OCI-LY7 (cell line): ENCODE measurements at regions of chr20 and their contacts with region 1.

Region 1: DNA sequence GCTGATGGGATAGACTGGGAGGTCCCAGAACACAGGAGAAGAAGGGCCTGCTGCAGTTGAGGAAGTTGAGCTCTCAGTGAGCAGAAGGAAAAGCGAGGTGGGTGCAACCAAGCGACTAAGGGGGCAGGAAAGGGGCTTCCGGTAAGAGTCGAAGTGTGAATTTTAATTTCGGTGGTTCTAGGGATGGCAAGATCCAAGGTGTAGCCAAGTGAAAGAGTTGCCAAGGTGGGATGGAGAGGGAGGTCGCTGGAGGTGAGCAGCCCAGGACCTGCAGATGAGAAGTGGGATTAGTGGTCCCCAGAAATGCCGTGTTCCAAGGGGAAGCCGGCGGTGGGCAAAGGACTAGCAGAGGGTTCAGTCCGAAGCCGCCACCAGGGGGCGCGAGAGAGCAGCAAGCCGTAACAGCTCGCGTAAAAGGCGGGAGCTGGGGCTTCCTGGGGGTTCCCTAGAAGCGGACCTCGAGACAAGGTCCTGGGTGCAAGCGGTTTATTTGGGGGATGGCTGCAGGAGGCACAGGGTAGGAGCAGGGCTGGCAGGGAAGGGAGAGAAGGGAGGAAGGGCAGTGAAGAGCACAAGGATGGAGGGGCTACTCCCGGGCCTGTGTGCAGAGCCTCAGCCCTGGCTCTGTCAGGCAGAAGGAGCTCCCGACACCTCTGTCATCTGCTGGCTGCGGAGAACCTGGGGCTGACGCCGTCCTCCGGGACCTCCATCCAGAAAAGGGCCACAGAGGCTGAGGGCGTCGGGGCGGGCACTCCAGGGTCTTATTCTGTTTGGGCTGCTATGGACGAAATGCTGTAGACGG is 103.6 kb downstream of the PAX1 start:
- DNase-seq: peak; percentile 49
- H3K4me3 ChIP-seq: no peak overlapping the region
- H3K27ac ChIP-seq: no peak overlapping the region
- H3K4me1 ChIP-seq: no peaks in the 10 kb centered on the region
- CTCF ChIP-seq: peak; percentile 84

Region 2: GRCh38 chr20:21656308-21657073 is 152.6 kb before region 1 on chr20:
- CTCF ChIA-PET with region 1: no interaction called
- POLR2A ChIA-PET with region 1: no interaction called
- intact Hi-C with region 1: no loop called
- DNase-seq: no peak
- H3K4me3 ChIP-seq: no peak overlapping the region
- H3K27ac ChIP-seq: no peak overlapping the region
- H3K4me1 ChIP-seq: no peaks in the 10 kb centered on the region
- CTCF ChIP-seq: no peak

Region 3: GRCh38 chr20:21795955-21796458 is 13.1 kb before region 1 on chr20:
- CTCF ChIA-PET with region 1: no interaction called
- POLR2A ChIA-PET with region 1: no interaction called
- intact Hi-C with region 1: no loop called
- DNase-seq: peak; percentile 4
- H3K4me3 ChIP-seq: no peak overlapping the region
- H3K27ac ChIP-seq: no peak overlapping the region
- H3K4me1 ChIP-seq: no peaks in the 10 kb centered on the region
- CTCF ChIP-seq: peak; percentile 70

Region 4: DNA sequence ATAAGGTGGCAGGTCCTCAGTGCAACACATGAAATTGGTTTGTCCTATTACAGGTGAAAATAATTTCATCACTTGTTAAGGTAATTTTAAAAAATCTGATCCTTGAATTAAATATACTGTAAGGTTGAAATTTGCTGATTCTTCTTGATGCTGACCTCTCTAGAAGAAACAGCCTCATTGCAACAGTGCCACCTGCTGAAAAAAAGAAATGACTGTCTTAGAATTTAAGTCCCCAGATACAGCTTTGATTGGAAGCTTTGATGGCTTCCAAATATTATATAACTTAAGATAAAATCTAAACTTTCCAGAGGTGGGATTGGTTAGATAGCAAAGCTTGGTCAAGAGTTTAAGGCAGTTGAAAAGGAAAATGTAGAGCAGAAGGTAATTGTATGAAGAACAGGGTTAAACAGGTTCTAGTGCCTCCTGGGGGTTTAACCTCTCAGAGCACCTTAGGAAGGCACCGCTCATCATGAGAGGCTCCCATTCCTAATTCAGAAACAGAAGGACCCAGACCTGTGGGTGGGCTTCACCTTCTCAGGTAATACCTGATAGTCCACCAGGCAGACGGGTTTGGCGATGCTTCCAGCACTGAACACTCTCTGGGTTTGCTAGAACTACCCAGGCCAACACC is 297.4 kb after region 1 on chr20:
- CTCF ChIA-PET with region 1: interaction called, 5 read pairs
- POLR2A ChIA-PET with region 1: no interaction called
- intact Hi-C with region 1: loop called (anchors 2 kb)
- DNase-seq: peak; percentile 18
- H3K4me3 ChIP-seq: no peak overlapping the region
- H3K27ac ChIP-seq: no peak overlapping the region
- H3K4me1 ChIP-seq: no peaks in the 10 kb centered on the region
- CTCF ChIP-seq: peak; percentile 73

Region 5: DNA sequence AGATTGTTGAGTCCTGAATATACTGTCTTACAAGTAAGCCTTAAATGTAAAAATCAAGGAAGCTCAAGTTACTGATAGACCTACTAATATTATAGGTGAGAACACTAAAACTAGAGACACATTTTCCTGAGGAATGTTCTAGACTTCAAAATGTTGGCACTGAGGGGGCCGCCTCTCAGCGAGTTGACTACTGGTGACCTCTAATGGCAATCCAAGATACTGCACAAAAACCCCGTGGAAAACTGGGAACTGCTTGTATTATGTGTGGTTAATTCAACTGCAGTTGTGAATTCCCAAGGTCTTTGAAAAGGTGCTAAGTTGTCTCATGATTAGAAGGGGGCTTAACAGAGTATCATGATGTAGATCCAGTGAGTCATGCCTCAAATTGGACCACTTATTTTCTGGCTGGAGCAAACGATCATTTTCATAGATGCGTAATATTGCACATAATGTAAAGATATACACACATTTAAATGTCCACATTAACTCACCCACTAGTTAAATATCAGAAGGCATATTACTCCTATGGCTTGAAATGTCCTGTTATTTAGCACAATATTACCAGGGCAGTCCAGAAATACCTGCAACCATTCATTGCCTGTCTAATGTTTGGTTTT is 439.1 kb after region 1 on chr20:
- CTCF ChIA-PET with region 1: no interaction called
- POLR2A ChIA-PET with region 1: no interaction called
- intact Hi-C with region 1: loop called (anchors 5 kb)
- DNase-seq: peak; percentile 16
- H3K4me3 ChIP-seq: no peak overlapping the region
- H3K27ac ChIP-seq: no peak overlapping the region
- H3K4me1 ChIP-seq: no peaks in the 10 kb centered on the region
- CTCF ChIP-seq: peak; percentile 83